ENCODE measurements at regions of chr1 and their contacts with region 1.

Region 1: GRCh38 chr1:86499987-86500593 is 31.4 kb downstream of the CLCA1 start:
- DNase-seq: no peak
- ATAC-seq: peak; percentile 37
- H3K4me3 Mint-ChIP-seq: no peak overlapping the region
- H3K27ac Mint-ChIP-seq: no peak overlapping the region
- H3K4me1 Mint-ChIP-seq: peaks cover 5% of the 10 kb centered on the region
- H3K27me3 Mint-ChIP-seq: peaks cover 8% of the 10 kb centered on the region

Region 2: DNA sequence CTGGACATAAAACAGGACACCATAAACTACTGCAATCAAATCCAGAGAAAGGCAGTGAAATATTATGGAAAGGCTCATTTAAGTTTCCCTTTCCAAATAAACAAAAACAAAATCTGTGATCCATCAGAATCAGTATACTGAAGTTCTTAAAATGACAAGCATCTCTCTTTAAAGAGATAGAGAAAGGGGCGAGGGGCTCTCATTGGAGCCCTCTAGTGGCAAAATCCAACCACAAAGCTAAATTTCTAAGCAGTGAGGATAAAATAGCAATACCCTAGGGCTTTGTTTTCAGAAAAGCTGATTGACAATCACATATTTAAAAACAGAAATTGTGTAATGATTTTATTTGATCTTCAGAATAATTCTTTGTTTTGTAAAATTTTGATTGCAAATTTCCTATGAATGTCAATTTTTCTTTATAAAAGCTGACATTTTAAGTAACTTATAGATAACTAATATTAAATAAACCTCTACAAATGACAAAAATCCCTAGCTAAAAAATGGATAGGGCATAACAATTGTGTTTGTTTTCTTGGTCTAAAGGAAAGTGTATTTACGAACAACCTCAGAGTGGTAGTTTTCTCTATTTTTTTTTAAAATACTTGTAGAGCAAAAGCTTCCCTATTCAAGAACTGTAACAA is 481.7 kb before region 1 on chr1:
- CTCF ChIA-PET with region 1: no interaction called
- POLR2A ChIA-PET with region 1: no interaction called
- intact Hi-C with region 1: no loop called
- DNase-seq: peak; percentile 19
- ATAC-seq: peak; percentile 44
- H3K4me3 Mint-ChIP-seq: no peak overlapping the region
- H3K27ac Mint-ChIP-seq: no peak overlapping the region
- H3K4me1 Mint-ChIP-seq: no peaks in the 10 kb centered on the region
- H3K27me3 Mint-ChIP-seq: no peaks in the 10 kb centered on the region

Region 3: GRCh38 chr1:86137436-86137835 is 362.7 kb before region 1 on chr1:
- CTCF ChIA-PET with region 1: no interaction called
- POLR2A ChIA-PET with region 1: no interaction called
- intact Hi-C with region 1: no loop called
- DNase-seq: no peak
- ATAC-seq: no peak
- H3K4me3 Mint-ChIP-seq: no peak overlapping the region
- H3K27ac Mint-ChIP-seq: no peak overlapping the region
- H3K4me1 Mint-ChIP-seq: no peaks in the 10 kb centered on the region
- H3K27me3 Mint-ChIP-seq: no peaks in the 10 kb centered on the region

Region 4: GRCh38 chr1:86380257-86380861 is 119.7 kb before region 1 on chr1:
- CTCF ChIA-PET with region 1: interaction called, 27 read pairs
- POLR2A ChIA-PET with region 1: no interaction called
- intact Hi-C with region 1: loop called (anchors 1 kb)
- DNase-seq: no peak
- ATAC-seq: peak; percentile 51
- H3K4me3 Mint-ChIP-seq: no peak overlapping the region
- H3K27ac Mint-ChIP-seq: no peak overlapping the region
- H3K4me1 Mint-ChIP-seq: peaks cover 8% of the 10 kb centered on the region
- H3K27me3 Mint-ChIP-seq: no peaks in the 10 kb centered on the region

Region 5: GRCh38 chr1:86419277-86419903 is 80.7 kb before region 1 on chr1:
- CTCF ChIA-PET with region 1: interaction called, 9 read pairs
- POLR2A ChIA-PET with region 1: no interaction called
- intact Hi-C with region 1: loop called (anchors 1 to 2 kb)
- DNase-seq: peak; percentile 59
- ATAC-seq: peak; percentile 94
- H3K4me3 Mint-ChIP-seq: no peak overlapping the region
- H3K27ac Mint-ChIP-seq: no peak overlapping the region
- H3K4me1 Mint-ChIP-seq: peaks cover 2% of the 10 kb centered on the region
- H3K27me3 Mint-ChIP-seq: no peaks in the 10 kb centered on the region

Region 6: DNA sequence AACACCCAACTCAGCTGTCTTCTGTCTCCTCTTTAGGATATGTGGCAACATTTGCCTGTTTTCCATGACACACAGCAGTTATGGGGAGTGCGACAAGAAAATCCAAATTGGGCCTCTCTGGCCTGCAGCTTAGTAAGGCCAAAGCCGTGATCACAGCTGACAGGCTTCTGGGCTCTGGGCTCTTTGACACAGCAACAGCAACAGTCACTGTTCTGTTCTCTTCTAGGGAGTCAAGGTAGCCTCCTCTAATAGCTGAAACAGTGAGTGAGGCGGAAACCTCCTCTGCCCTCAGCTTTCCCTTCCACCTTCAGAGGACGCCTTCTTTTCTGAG is 12.3 kb before region 1 on chr1:
- CTCF ChIA-PET with region 1: interaction called, 31 read pairs
- POLR2A ChIA-PET with region 1: no interaction called
- intact Hi-C with region 1: no loop called
- DNase-seq: no peak
- ATAC-seq: no peak
- H3K4me3 Mint-ChIP-seq: no peak overlapping the region
- H3K27ac Mint-ChIP-seq: no peak overlapping the region
- H3K4me1 Mint-ChIP-seq: no peaks in the 10 kb centered on the region
- H3K27me3 Mint-ChIP-seq: peaks cover 3% of the 10 kb centered on the region

Region 7: DNA sequence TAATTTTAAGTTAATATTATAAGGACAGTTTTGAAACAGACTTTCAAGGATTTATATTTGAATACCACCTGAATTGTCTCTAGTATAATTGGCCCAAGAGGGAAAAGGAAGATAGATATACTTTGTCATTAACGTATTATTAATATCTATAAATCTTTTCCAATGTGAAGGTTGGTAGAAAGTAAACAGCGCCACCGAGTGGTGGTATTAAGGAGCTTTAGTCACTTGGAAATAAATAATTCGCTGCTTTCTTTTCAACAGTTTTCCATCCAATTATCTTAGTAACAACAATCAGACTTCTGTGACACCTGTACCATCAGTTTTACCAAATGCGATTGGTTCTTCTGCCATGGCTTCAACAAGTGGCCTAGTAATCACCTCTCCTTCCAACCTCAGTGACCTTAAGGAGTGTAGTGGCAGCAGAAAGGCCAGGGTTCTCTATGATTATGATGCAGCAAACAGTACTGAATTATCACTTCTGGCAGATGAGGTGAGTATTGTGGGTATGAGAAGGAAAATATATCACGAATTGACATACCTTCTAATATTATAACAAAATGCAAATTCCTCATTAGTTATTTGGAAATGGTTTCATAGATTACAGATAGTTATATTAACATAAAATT is 242.0 kb after region 1 on chr1:
- CTCF ChIA-PET with region 1: interaction called, 11 read pairs
- POLR2A ChIA-PET with region 1: no interaction called
- intact Hi-C with region 1: loop called (anchors 2 to 5 kb)
- DNase-seq: peak; percentile 47
- ATAC-seq: no peak
- H3K4me3 Mint-ChIP-seq: no peak overlapping the region
- H3K27ac Mint-ChIP-seq: no peak overlapping the region
- H3K4me1 Mint-ChIP-seq: peaks cover 2% of the 10 kb centered on the region
- H3K27me3 Mint-ChIP-seq: no peaks in the 10 kb centered on the region